Thyroid gland (tissue), 4 donors: ENCODE measurements at regions of chr22 and their contacts with region 1.

Region 1: GRCh38 chr22:17501679-17502285 is 61.5 kb upstream of the SLC25A18 start:
- DNase-seq: peak; percentile 2 to 5
- H3K4me3 ChIP-seq: no peak overlapping the region
- H3K27ac ChIP-seq: no peak overlapping the region
- H3K4me1 ChIP-seq: no peaks in the 10 kb centered on the region
- H3K27me3 ChIP-seq: no peaks in the 10 kb centered on the region
- CTCF ChIP-seq: peak; percentile 14 to 87 (median 68)
- POLR2A ChIP-seq: no peak

Region 2: GRCh38 chr22:17077255-17077654 is 424.5 kb before region 1 on chr22:
- intact Hi-C with region 1: loop called (anchors 5 kb)
- DNase-seq: no peak
- H3K4me3 ChIP-seq: no peak overlapping the region
- H3K27ac ChIP-seq: no peak overlapping the region
- H3K4me1 ChIP-seq: no peaks in the 10 kb centered on the region
- H3K27me3 ChIP-seq: no peaks in the 10 kb centered on the region
- CTCF ChIP-seq: no peak
- POLR2A ChIP-seq: no peak

Region 3: GRCh38 chr22:17171313-17172171 is 330.2 kb before region 1 on chr22:
- intact Hi-C with region 1: loop called (anchors 5 kb)
- DNase-seq: peak; percentile 87 to 90
- H3K4me3 ChIP-seq: peak overlapping the region; percentile 46 to 61 (median 59)
- H3K27ac ChIP-seq: peak overlapping the region; percentile 84 to 98 (median 95)
- H3K4me1 ChIP-seq: peaks cover 0 to 15% of the 10 kb centered on the region in 2 donors
- H3K27me3 ChIP-seq: no peaks in the 10 kb centered on the region
- CTCF ChIP-seq: peak; percentile 60 to 91 (median 82)
- POLR2A ChIP-seq: peak in 1 of 2 donors; percentile 63